ENCODE measurements at regions of chr3 and their contacts with region 1.

Region 1: DNA sequence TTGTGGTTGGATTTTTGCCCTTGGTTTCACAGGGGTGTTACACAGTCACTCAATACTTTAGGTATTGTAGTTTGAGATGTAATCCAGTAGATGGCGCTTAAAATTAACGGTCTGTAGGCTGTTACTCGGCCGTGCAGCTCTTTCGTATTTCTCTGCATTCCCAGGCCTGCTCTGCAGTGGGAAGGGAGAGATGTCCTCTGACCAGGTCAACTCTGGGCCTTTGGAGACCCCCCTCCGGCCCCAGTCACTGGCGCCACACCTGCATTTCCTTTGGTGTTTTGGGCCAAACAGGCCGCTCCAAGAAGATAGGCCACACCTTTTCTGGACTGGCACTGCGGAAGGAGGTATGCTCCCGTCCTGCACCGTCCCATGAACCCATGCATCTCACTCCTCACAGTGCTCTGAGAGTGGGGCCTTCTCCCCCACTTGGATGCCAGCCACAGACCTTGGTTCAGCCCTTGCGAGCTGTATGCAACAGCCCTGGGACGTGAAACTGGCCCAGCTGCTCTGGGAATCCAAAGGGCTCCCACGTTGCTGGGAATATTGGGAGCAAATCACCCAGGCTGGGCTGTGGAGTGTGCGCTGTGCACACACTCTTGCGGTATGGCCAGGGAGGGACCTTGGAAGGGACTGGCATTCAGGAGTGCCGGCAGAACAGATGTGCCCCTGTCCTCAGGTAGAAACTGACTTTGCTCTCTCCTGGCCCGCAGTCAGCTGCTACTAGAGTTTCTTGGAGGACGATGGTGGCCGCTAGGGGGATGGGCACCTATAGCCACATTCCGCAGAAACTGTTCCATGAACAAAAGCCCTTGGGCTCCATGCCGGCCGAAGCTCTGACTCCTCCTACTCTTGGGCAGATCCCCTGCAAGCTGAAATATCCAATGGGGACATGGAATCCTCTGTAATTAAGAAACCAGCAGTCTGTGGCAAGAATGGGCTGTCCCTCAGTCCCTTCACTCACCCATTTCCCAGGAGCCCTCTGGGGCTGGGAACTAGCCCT is 410.5 kb upstream of the CADM2 start:
- DNase-seq: peak; percentile 21 to 40 (median 39)
- ATAC-seq: peak; percentile 76 to 88
- H3K4me3 ChIP-seq: no peak overlapping the region
- H3K27ac ChIP-seq: no peak overlapping the region
- H3K4me1 ChIP-seq: no peaks in the 10 kb centered on the region
- H3K27me3 ChIP-seq: no peaks in the 10 kb centered on the region

Region 2: GRCh38 chr3:84601303-84601702 is 53.0 kb after region 1 on chr3:
- intact Hi-C with region 1: no loop called
- DNase-seq: no peak
- ATAC-seq: no peak
- H3K4me3 ChIP-seq: no peak overlapping the region
- H3K27ac ChIP-seq: no peak overlapping the region
- H3K4me1 ChIP-seq: no peaks in the 10 kb centered on the region
- H3K27me3 ChIP-seq: no peaks in the 10 kb centered on the region

Region 3: GRCh38 chr3:84634668-84635067 is 86.4 kb after region 1 on chr3:
- intact Hi-C with region 1: no loop called
- DNase-seq: no peak
- ATAC-seq: no peak
- H3K4me3 ChIP-seq: no peak overlapping the region
- H3K27ac ChIP-seq: no peak overlapping the region
- H3K4me1 ChIP-seq: no peaks in the 10 kb centered on the region
- H3K27me3 ChIP-seq: no peaks in the 10 kb centered on the region

Region 4: DNA sequence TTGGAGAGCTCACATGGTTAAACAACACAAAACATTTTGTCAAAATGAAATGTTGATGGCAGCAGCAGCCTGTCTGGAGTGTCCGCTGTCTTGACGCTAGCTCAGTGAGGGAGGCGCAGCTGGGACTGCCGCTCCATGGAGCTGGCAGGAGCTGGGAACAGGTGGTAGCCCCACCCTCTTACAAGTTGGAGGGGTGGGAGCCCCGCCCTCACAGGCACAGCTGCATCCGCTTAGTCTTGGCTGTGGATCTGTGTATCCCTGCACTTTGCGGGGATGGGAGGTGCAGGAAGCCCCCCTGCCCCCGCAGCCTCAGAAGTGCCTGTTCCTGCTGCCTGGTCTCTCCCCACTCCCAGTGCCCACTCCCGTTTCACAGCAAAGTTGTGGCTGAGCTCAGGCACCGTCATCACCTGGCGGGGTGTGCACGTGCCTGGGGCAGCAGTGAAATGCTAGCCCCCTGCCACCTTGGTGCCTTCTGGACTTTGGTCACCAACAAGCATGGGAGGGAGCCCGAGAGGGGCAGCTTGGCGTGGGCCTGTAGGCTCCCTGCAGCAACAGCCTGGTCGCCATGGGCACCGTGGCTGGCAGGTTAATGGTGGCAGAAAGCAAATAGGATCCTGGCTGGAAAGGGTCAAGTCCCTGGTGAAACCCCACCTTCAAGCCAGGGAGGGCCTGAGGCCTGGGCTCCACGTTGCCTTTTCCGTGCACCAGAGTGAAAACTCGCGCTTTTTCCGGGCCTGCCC is 356.7 kb after region 1 on chr3:
- intact Hi-C with region 1: no loop called
- DNase-seq: no peak
- ATAC-seq: no peak
- H3K4me3 ChIP-seq: no peak overlapping the region
- H3K27ac ChIP-seq: no peak overlapping the region
- H3K4me1 ChIP-seq: no peaks in the 10 kb centered on the region
- H3K27me3 ChIP-seq: no peaks in the 10 kb centered on the region

Region 5: DNA sequence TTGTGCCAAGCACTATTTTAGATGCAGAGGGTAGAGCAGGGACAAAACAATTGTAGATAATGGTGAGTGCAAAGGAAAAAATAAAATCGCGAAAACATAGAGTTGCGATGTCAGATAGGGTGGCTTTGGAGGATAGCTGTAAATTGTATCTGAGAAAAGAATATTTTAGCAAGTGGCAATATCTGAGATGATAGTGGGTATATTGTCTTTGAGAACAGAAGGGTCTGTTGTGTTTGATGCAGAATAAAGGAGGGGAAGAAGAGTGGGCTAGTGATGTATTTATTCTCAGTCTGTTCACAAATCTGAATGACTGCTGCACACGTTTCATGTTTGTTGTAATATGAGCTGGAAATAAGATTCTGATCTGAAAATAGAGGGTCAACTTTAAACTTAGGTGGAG is 807.3 kb after region 1 on chr3:
- intact Hi-C with region 1: loop called in 2 of 4 experiments (anchors 10 kb)
- DNase-seq: no peak
- ATAC-seq: no peak
- H3K4me3 ChIP-seq: no peak overlapping the region
- H3K27ac ChIP-seq: no peak overlapping the region
- H3K4me1 ChIP-seq: no peaks in the 10 kb centered on the region
- H3K27me3 ChIP-seq: no peaks in the 10 kb centered on the region

Region 6: DNA sequence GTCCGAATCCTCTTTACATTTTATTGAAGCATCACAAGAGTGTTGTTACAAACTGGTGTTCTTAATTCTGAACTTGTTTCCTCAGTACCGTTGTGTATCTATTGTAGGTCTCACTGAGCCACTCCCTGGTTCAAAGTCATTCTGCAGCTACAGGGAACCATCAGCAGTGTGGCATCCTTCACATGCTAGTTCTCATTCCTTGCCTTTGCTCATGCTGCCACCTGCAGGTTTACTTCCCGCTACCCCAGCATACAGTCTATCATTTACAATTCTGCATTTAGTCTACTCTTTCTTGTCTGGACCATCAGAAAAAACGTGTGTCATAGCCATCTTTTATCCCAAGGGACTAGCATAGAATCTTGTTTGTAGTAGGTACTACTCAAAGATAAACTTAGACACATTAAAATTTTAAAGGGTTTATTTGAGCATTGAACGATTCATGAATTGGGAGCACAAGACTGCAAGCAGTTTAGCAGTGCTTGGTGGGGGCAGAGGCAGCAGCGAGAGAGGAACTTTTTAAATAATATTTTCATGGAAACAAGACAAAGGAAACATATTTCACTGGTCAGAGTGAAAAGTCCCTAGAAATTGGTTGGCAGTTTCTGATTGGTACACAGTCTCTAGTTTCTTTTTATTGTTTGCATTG is 812.6 kb after region 1 on chr3:
- intact Hi-C with region 1: loop called in 2 of 4 experiments (anchors 10 kb)
- DNase-seq: peak in 2 of 3 donors; percentile 26 to 67
- ATAC-seq: peak; percentile 64 to 86
- H3K4me3 ChIP-seq: no peak overlapping the region
- H3K27ac ChIP-seq: no peak overlapping the region
- H3K4me1 ChIP-seq: no peaks in the 10 kb centered on the region
- H3K27me3 ChIP-seq: no peaks in the 10 kb centered on the region

Region 7: DNA sequence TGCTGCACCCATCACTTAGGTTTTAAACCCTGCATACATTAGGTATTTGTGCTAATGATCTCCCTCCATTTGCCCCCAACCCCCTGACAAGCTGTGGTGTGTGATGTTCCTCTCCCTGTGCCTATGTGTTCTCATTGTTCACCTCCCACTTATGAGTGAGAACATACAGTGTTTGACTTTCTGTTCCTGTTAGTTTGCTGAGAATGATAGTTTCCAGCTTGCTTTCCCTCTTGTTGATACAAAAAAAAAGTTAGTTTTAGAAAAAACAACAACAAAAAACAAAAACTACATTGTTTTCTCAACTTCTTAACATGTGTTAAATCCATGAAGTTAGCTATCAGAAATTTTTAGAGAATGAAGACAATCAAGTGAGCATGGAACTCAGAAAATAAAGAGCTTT is 1489.6 kb after region 1 on chr3:
- intact Hi-C with region 1: no loop called
- DNase-seq: no peak
- ATAC-seq: no peak
- H3K4me3 ChIP-seq: no peak overlapping the region
- H3K27ac ChIP-seq: no peak overlapping the region
- H3K4me1 ChIP-seq: no peaks in the 10 kb centered on the region
- H3K27me3 ChIP-seq: no peaks in the 10 kb centered on the region